Activated CD8-positive, alpha-beta T cell treated with anti-CD3 and anti-CD28 coated beads for 36 hours (primary cell): ENCODE measurements at regions of chr12 and their contacts with region 1.

Region 1: GRCh38 chr12:56998981-56999380 is 7.4 kb downstream of the ZBTB39 start:
- DNase-seq: peak; percentile 85
- ATAC-seq: peak; percentile 86
- H3K4me3 Mint-ChIP-seq: no peak overlapping the region
- H3K27ac Mint-ChIP-seq: peak overlapping the region; percentile 67
- H3K4me1 Mint-ChIP-seq: peaks cover 44% of the 10 kb centered on the region
- H3K27me3 Mint-ChIP-seq: no peaks in the 10 kb centered on the region
- CTCF ChIP-seq: no peak

Region 2: GRCh38 chr12:56636675-56637540 is 362.1 kb before region 1 on chr12:
- CTCF ChIA-PET with region 1: no interaction called
- POLR2A ChIA-PET with region 1: no interaction called
- intact Hi-C with region 1: loop called (anchors 10 kb)
- DNase-seq: peak; percentile 99
- ATAC-seq: peak; percentile 65
- H3K4me3 Mint-ChIP-seq: peak overlapping the region; percentile 91
- H3K27ac Mint-ChIP-seq: peak overlapping the region; percentile 98
- H3K4me1 Mint-ChIP-seq: peaks cover 58% of the 10 kb centered on the region
- H3K27me3 Mint-ChIP-seq: no peaks in the 10 kb centered on the region
- CTCF ChIP-seq: peak; percentile 66

Region 3: DNA sequence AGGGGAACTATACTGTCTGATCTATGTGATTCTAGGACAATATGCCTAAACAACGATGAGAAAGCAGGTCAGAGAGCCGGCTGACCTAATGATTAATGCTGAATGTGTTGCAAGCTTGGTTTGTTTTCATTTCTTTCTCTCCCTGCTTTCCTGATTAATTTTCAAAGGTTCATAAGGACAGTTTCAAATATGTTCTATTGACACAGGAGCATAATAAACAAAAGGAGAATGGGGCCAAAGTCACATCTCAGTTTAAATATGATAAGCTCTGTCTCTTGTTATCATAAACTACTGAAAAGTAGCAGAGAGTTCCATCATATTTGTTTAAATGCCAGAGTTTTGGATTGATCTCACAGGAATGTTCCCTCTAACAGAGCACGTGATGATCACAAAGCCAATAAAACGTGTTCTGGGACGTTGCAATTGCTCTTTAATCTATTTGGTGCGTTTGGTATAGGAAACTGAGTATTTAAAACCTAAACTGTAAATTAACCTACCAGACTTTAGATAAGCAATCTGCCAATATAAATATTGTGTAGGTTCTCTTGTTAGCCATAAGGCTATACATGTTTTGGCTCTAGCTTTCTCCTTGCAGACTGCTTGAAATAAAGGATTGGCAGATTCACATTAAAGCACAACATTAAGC is 239.6 kb before region 1 on chr12:
- CTCF ChIA-PET with region 1: interaction called, 34 read pairs
- POLR2A ChIA-PET with region 1: no interaction called
- intact Hi-C with region 1: no loop called
- DNase-seq: no peak
- ATAC-seq: no peak
- H3K4me3 Mint-ChIP-seq: no peak overlapping the region
- H3K27ac Mint-ChIP-seq: no peak overlapping the region
- H3K4me1 Mint-ChIP-seq: peaks cover 9% of the 10 kb centered on the region
- H3K27me3 Mint-ChIP-seq: no peaks in the 10 kb centered on the region
- CTCF ChIP-seq: no peak

Region 4: DNA sequence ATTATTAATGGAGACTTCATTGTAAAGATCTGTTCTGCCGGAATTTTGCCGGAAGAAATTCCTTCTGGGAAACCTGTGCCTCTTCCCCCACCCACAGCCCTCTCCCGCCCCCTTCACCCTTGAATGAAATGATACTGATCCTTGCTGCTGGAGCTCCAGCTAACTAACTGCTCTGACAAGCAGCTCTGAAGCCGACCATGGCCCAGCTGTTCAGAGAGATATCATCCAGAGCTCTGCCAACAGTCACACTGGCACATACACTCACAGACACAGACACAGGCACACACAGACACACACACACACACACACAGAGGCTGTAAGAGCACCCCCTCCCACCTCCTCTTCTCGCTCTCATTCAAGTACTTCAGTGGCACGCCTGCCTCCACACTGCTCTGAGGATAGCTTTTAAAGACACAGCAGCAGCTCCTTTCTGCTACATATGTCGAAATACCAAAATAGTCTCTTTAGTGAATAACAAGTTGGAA is 343.3 kb after region 1 on chr12:
- CTCF ChIA-PET with region 1: no interaction called
- POLR2A ChIA-PET with region 1: no interaction called
- intact Hi-C with region 1: no loop called
- DNase-seq: peak; percentile 11
- ATAC-seq: peak; percentile 43
- H3K4me3 Mint-ChIP-seq: no peak overlapping the region
- H3K27ac Mint-ChIP-seq: peak overlapping the region; percentile 45
- H3K4me1 Mint-ChIP-seq: peaks cover 33% of the 10 kb centered on the region
- H3K27me3 Mint-ChIP-seq: no peaks in the 10 kb centered on the region
- CTCF ChIP-seq: no peak